HepG2 (cell line): ENCODE measurements at regions of chr1 and their contacts with region 1.

Region 1: DNA sequence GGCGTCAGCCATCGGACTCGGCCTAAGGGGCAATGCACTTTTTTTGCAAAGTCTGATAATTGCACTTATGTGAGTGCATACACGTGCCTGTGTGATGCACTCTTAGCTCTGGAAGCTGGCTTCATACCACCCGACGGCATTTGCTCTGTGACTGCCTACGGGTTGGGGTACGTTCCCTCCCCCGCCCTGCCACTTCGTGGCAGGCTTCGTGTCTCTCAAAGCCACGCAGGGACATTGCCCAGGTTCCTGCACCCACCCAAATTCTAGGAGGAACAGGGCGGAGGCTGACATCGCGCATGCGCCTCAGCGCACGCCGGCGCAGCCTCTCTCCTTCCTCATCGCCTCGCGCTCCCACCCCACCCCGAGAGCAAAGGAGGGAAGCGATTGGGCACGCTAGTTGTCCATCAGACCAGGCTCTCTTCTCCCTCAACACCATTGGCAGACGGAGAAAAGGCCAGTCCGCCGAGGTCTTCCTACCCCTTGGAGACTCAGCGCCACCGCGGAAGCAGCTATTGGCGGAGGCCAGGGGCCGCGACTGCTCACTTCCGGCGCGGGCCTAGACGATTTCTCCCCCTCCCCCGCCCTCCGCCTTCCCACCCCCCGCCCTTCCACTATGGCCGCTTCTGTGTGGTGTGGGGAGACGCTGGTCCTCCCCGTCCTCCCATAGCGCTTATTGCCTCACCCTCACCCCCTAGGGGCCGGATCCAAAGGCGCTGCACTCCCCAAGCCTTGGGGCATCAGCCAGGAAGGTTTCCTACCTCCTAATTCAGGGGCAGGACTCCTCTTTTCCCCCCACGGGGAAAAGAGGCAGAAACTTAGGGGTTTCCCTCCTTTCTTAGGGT is at the start of gene INTS3:
- DNase-seq: peak; percentile 99
- ATAC-seq: peak; percentile 99
- H3K4me3 ChIP-seq: peak within 1 kb of the TSS; percentile 89 to 95 (median 92)
- H3K27ac ChIP-seq: peak within 1 kb of the TSS; percentile 95
- H3K4me1 ChIP-seq: peaks cover 46% of the 10 kb centered on the region
- H3K27me3 ChIP-seq: no peaks in the 10 kb centered on the region; a peak in 1 of 5 replicates
- CTCF ChIP-seq: no peak
- EP300 ChIP-seq: no peak
- POLR2A ChIP-seq: peak; percentile 73 to 76
- RAD21 ChIP-seq: no peak
- total RNA-seq, gene INTS3: 14.7 and 17.2 TPM in 2 replicates

Region 2: GRCh38 chr1:153670859-153671627 is 56.6 kb before region 1 on chr1 and contains the start of gene ILF2:
- CTCF ChIA-PET with region 1: no interaction called
- POLR2A ChIA-PET with region 1: interaction called, 7 read pairs
- in situ Hi-C with region 1: no loop called
- intact Hi-C with region 1: loop called (anchors 5 kb)
- DNase-seq: peak; percentile 99
- ATAC-seq: peak; percentile 96
- H3K4me3 ChIP-seq: peak within 1 kb of the TSS; percentile 65 to 92 (median 83)
- H3K27ac ChIP-seq: peak within 1 kb of the TSS; percentile 90
- H3K4me1 ChIP-seq: peaks cover 29% of the 10 kb centered on the region
- H3K27me3 ChIP-seq: no peaks in the 10 kb centered on the region; a peak in 1 of 5 replicates
- CTCF ChIP-seq: peak; percentile 65
- EP300 ChIP-seq: peak in 1 of 2 experiments; percentile 36; a peak in 1 of 4 replicates
- POLR2A ChIP-seq: peak; percentile 89 to 94
- RAD21 ChIP-seq: no peak
- total RNA-seq, gene ILF2: 366 and 491 TPM in 2 replicates

Region 3: DNA sequence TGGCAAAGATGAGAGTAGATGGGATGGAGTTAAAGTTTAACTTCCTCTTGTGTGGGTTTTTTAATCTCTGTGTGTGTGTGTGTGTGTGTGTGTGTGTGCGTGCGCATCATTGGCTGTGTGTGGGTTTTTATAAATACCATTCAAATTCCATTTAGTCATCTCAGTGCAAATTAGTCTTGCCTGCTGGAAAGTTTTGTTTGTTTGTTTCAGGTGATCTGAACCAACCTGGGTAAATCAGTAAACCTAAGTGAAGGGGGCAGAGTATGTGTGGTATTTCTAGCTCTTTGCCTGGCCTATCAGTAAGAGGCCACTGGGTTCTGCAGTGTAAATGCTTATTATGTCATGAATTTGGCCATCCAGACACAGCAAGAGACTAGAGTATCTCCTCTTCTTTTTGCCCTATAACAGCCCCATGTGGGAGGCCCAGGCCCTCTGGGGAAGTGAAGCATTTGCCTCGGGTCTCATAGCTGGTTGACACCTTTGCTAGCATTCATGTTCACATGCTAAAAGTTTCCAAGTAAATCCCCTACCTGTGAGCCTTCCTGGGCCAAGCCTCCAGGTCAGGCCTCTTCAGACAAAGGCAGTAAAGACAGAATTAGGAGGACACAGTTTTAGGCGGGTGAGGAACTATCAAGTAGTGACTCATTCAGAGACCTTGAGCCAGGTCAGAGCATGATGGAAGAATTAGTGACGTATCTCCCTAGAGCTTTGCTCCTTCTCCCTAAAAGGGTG is 14.9 kb after region 1 on chr1:
- CTCF ChIA-PET with region 1: no interaction called
- POLR2A ChIA-PET with region 1: interaction called, 22 read pairs
- in situ Hi-C with region 1: no loop called
- intact Hi-C with region 1: loop called (anchors 2 kb)
- DNase-seq: peak; percentile 87
- ATAC-seq: peak; percentile 98
- H3K4me3 ChIP-seq: no peak overlapping the region; a peak in 1 of 6 replicates
- H3K27ac ChIP-seq: peak overlapping the region; percentile 34
- H3K4me1 ChIP-seq: peaks cover 36% of the 10 kb centered on the region
- H3K27me3 ChIP-seq: no peaks in the 10 kb centered on the region
- CTCF ChIP-seq: no peak
- EP300 ChIP-seq: peak in 1 of 2 experiments; percentile 37; a peak in 1 of 4 replicates
- POLR2A ChIP-seq: no peak
- RAD21 ChIP-seq: no peak

Region 4: DNA sequence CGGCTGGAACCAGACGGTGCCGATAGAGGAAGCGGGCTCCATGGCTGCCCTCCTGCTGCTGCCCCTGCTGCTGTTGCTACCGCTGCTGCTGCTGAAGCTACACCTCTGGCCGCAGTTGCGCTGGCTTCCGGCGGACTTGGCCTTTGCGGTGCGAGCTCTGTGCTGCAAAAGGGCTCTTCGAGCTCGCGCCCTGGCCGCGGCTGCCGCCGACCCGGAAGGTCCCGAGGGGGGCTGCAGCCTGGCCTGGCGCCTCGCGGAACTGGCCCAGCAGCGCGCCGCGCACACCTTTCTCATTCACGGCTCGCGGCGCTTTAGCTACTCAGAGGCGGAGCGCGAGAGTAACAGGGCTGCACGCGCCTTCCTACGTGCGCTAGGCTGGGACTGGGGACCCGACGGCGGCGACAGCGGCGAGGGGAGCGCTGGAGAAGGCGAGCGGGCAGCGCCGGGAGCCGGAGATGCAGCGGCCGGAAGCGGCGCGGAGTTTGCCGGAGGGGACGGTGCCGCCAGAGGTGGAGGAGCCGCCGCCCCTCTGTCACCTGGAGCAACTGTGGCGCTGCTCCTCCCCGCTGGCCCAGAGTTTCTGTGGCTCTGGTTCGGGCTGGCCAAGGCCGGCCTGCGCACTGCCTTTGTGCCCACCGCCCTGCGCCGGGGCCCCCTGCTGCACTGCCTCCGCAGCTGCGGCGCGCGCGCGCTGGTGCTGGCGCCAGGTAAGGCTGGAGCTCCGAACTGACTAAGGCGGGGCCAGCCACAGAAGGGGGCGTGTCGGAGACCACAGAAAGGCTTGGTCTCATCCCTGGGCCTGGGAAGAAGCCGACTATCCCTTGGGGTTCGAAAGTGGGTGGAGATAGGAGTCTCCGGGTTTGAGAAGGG is 48.0 kb after region 1 on chr1:
- CTCF ChIA-PET with region 1: no interaction called
- POLR2A ChIA-PET with region 1: interaction called, 27 read pairs
- in situ Hi-C with region 1: no loop called
- intact Hi-C with region 1: no loop called
- DNase-seq: no peak
- ATAC-seq: peak; percentile 76
- H3K4me3 ChIP-seq: peak overlapping the region; percentile 70 to 83 (median 75)
- H3K27ac ChIP-seq: peak overlapping the region; percentile 53
- H3K4me1 ChIP-seq: peaks cover 50% of the 10 kb centered on the region
- H3K27me3 ChIP-seq: no peaks in the 10 kb centered on the region
- CTCF ChIP-seq: peak; percentile 31
- EP300 ChIP-seq: no peak
- POLR2A ChIP-seq: peak in 1 of 2 experiments; percentile 77; a peak in 1 of 4 replicates
- RAD21 ChIP-seq: 0 out of 2 replicates have a peak, but pooled peaks have one; percentile 8